ENCODE measurements at regions of chr12 and their contacts with region 1.

Region 1: DNA sequence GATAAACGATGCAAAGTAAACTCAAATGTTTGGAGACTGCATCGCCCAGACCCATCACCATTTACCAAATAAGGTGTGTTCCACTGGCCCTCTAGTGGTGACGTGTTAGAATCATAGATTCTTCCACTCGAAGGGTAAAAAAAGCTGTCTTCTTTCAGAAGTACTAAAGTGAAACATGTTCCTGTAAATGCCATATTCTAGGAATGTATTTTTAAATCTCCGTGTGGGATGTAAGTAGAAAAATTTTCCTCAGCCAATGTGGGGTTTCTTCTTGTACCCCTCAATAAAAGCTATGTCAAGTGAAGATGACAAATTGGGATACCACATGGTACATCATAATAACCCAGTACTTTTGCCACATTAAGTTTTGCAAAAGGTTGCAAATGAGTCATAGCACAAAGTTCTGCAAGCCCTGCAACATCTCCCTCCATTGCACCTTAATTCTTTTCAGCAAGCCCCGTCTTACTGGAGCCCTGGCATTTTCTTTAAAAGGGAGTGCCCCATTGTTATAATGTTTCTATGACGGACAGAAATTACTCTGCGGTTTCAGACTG is 100.8 kb downstream of the CCER1 start:
- DNase-seq: peak in 1 of 2 experiments; percentile 1
- H3K4me3 ChIP-seq: no peak overlapping the region
- H3K27ac ChIP-seq: no peak overlapping the region
- H3K4me1 ChIP-seq: no peaks in the 10 kb centered on the region
- H3K27me3 ChIP-seq: no peaks in the 10 kb centered on the region
- CTCF ChIP-seq: peak in 2 of 3 experiments; percentile 38 to 72; a peak in 3 of 4 replicates
- EP300 ChIP-seq: no peak
- POLR2A ChIP-seq: no peak
- RAD21 ChIP-seq: peak; percentile 71 to 75

Region 2: GRCh38 chr12:90842477-90842876 is 11.7 kb before region 1 on chr12:
- CTCF ChIA-PET with region 1: interaction called, 11 read pairs
- POLR2A ChIA-PET with region 1: no interaction called
- DNase-seq: peak in 1 of 2 experiments; percentile 5
- H3K4me3 ChIP-seq: no peak overlapping the region
- H3K27ac ChIP-seq: no peak overlapping the region
- H3K4me1 ChIP-seq: peaks cover 0 to 3% (median under 1%) of the 10 kb centered on the region in 4 experiments; a peak in 1 of 7 replicates
- H3K27me3 ChIP-seq: no peaks in the 10 kb centered on the region
- CTCF ChIP-seq: no peak
- EP300 ChIP-seq: no peak
- POLR2A ChIP-seq: no peak
- RAD21 ChIP-seq: no peak

Region 3: DNA sequence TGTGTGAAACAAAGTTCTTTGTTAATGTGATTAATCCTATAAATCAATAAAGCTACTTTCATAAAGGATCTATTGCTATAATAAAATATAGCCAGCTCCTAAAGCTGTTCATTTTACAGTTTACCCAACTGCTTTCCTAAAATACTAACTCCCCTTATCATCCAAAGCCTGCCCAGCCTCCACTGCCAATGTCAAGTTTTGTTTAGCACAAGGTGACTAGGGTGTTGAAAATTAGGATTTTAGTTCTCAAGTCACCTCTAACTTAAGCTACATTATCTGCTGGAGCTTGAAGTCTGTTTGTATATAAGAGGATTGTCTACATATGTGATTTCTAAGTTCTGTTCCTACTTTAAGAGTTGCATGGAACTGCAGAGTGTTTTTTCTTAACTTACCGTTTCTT is 14.4 kb after region 1 on chr12:
- CTCF ChIA-PET with region 1: interaction called, 10 read pairs
- POLR2A ChIA-PET with region 1: no interaction called
- DNase-seq: no peak
- H3K4me3 ChIP-seq: no peak overlapping the region
- H3K27ac ChIP-seq: no peak overlapping the region
- H3K4me1 ChIP-seq: no peaks in the 10 kb centered on the region
- H3K27me3 ChIP-seq: no peaks in the 10 kb centered on the region
- CTCF ChIP-seq: no peak
- EP300 ChIP-seq: no peak
- POLR2A ChIP-seq: no peak
- RAD21 ChIP-seq: no peak